ENCODE measurements at regions of chr1 and their contacts with region 1.

Region 1: GRCh38 chr1:228275739-228276421 is 68.0 kb downstream of the OBSCN start:
- DNase-seq: peak; percentile 76 to 97 (median 90)
- ATAC-seq: peak; percentile 95
- H3K4me3 ChIP-seq: peak overlapping the region; percentile 75
- H3K4me3 Mint-ChIP-seq: peak overlapping the region; percentile 82
- H3K27ac ChIP-seq: peak overlapping the region; percentile 28 to 56
- H3K27ac Mint-ChIP-seq: peak overlapping the region; percentile 81
- H3K4me1 ChIP-seq: peaks cover 27% of the 10 kb centered on the region
- H3K4me1 Mint-ChIP-seq: peaks cover 14% of the 10 kb centered on the region
- H3K27me3 ChIP-seq: no peaks in the 10 kb centered on the region
- H3K27me3 Mint-ChIP-seq: no peaks in the 10 kb centered on the region
- CTCF ChIP-seq: no peak

Region 2: GRCh38 chr1:227728059-227728891 is 547.6 kb before region 1 on chr1:
- CTCF ChIA-PET with region 1: no interaction called
- POLR2A ChIA-PET with region 1: no interaction called
- intact Hi-C with region 1: loop called in 1 of 2 experiments (anchors 5 kb)
- DNase-seq: peak in 13 of 14 experiments; percentile 46 to 90 (median 70)
- ATAC-seq: peak; percentile 58
- H3K4me3 ChIP-seq: peak overlapping the region; percentile 77
- H3K4me3 Mint-ChIP-seq: peak overlapping the region; percentile 88
- H3K27ac ChIP-seq: peak overlapping the region in 1 of 2 donors; percentile 9
- H3K27ac Mint-ChIP-seq: peak overlapping the region; percentile 76
- H3K4me1 ChIP-seq: peaks cover 27% of the 10 kb centered on the region
- H3K4me1 Mint-ChIP-seq: peaks cover 26% of the 10 kb centered on the region
- H3K27me3 ChIP-seq: no peaks in the 10 kb centered on the region
- H3K27me3 Mint-ChIP-seq: peaks cover 5% of the 10 kb centered on the region
- CTCF ChIP-seq: no peak

Region 3: DNA sequence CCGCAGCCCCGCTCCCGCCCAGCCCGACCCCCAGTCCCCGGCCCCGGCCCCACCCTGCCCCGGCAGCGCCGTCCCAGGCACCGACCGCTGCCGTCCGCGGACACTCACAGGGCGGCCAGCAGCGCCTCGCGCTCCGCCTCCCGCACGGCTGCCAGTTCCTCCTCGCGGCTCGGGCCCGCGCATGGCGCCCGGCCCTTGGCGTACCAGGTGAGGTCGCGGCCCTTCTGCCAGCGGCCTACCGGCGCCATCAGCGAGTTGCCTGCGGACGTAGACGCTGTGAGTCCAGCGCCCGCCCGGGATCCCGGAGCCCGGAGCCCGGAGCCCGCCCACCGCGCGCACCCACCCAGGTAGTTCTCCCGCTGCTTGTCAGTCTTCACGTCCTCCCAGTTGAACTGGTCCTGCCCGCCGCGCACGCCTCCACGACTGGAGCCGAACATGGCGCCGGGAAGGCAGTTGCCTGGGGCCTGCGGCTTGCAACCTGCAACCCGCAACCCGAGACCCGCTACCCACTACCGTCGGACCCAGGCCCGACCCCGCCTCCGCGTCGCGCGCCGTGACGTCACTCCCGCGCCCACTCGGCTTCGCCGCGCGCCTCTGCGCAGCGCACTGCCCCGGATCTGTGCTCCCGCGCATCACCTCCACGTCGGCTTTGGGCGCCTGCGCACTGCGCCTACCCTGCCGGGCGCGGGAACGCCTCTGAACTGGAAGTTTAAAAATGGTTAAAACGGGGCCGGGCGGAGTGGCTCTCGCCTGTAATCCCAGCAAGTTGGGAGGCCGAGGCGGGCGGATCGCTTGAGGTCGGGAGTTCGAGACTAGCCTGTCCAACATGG is 172.9 kb before region 1 on chr1 and contains the start of gene C1orf35:
- CTCF ChIA-PET with region 1: no interaction called
- POLR2A ChIA-PET with region 1: no interaction called
- intact Hi-C with region 1: loop called in 1 of 2 experiments (anchors 1 kb)
- DNase-seq: peak; percentile 87 to 96 (median 92)
- ATAC-seq: peak; percentile 78
- H3K4me3 ChIP-seq: peak within 1 kb of the TSS; percentile 83
- H3K4me3 Mint-ChIP-seq: peak within 1 kb of the TSS; percentile 96
- H3K27ac ChIP-seq: peak within 1 kb of the TSS; percentile 77 to 87
- H3K27ac Mint-ChIP-seq: peak within 1 kb of the TSS; percentile 97
- H3K4me1 ChIP-seq: peaks cover 37% of the 10 kb centered on the region
- H3K4me1 Mint-ChIP-seq: peaks cover 33% of the 10 kb centered on the region
- H3K27me3 ChIP-seq: no peaks in the 10 kb centered on the region
- H3K27me3 Mint-ChIP-seq: no peaks in the 10 kb centered on the region
- CTCF ChIP-seq: no peak
- total RNA-seq, gene C1orf35: 36.6 to 40.3 TPM

Region 4: DNA sequence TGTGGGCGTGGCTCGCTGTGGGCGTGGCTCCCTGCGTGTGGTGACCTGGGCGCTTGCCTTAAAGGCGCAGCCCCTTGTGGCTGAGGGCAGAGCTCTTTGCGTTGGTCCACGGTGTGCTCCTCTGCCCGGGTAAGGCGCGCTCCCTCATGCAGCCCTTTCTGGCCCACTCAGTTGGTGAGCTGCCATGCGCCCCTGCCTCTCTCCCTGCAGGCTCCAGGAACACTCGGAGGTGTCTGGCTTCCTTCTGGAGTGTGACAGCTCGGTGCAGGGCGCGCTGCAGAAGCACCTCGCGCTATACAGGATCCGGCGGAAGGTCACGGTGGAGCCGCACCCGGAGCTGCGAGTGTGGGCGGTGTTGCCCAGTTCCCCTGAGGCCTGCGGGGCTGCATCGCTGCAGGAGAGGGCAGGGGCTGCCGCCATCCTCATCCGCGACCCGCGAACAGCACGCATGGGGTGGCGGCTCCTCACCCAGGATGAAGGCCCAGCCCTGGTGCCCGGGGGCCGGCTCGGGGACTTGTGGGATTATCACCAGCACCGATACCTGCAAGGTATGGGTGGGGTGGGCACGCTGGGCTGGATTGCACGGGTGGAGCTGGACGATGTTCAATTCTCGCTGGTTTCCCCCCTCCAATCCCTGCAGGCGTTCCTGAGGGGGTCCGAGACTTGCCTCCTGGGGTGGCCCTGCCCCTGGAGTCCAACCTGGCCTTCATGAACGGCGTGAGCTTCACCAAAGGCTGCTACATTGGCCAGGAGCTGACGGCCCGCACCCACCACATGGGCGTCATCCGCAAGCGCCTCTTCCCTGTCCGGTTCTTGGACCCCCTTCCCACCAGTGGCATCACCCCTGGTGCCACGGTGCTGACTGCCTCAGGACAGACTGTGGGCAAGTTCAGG is 101.2 kb before region 1 on chr1:
- CTCF ChIA-PET with region 1: no interaction called
- POLR2A ChIA-PET with region 1: no interaction called
- intact Hi-C with region 1: loop called in 1 of 2 experiments (anchors 2 kb)
- DNase-seq: peak in 6 of 14 experiments; percentile 25 to 81 (median 58)
- ATAC-seq: peak; percentile 69
- H3K4me3 ChIP-seq: no peak overlapping the region
- H3K4me3 Mint-ChIP-seq: peak overlapping the region; percentile 7
- H3K27ac ChIP-seq: no peak overlapping the region
- H3K27ac Mint-ChIP-seq: peak overlapping the region; percentile 36
- H3K4me1 ChIP-seq: peaks cover 6% of the 10 kb centered on the region
- H3K4me1 Mint-ChIP-seq: peaks cover 7% of the 10 kb centered on the region
- H3K27me3 ChIP-seq: no peaks in the 10 kb centered on the region
- H3K27me3 Mint-ChIP-seq: no peaks in the 10 kb centered on the region
- CTCF ChIP-seq: no peak

Region 5: DNA sequence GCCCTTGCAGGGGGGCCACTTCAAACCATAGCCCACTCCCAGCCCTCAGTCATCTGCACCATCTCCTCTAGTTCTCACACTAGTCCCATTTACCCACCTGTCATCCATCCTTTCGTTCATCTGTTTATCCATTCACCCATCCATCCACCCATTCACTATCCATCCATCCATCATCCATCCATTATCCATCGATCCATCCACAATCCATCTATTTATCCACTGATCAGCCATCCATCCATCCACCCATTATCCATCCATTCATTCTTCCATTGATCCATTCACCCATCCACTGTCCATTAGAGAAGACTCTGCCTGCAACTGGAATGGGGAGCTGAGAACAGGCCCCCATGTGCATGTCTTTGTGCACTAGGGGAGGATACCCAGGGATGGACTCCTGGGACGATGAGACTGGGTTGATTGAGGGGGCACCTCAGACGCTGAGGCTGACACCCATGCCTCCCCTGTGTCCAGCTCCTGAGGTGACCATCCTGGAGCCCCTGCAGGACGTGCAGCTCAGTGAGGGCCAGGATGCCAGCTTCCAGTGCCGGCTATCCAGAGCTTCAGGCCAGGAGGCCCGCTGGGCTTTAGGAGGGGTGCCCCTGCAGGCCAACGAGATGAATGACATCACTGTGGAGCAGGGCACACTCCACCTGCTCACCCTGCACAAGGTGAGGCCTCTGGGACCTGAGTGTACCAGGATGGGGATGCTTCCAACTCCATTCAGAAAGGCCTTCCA is 32.9 kb after region 1 on chr1:
- CTCF ChIA-PET with region 1: no interaction called
- POLR2A ChIA-PET with region 1: no interaction called
- intact Hi-C with region 1: no loop called
- DNase-seq: peak in 2 of 14 experiments; percentile 6 to 28
- ATAC-seq: no peak
- H3K4me3 ChIP-seq: no peak overlapping the region
- H3K4me3 Mint-ChIP-seq: no peak overlapping the region
- H3K27ac ChIP-seq: no peak overlapping the region
- H3K27ac Mint-ChIP-seq: no peak overlapping the region
- H3K4me1 ChIP-seq: no peaks in the 10 kb centered on the region
- H3K4me1 Mint-ChIP-seq: no peaks in the 10 kb centered on the region
- H3K27me3 ChIP-seq: no peaks in the 10 kb centered on the region
- H3K27me3 Mint-ChIP-seq: no peaks in the 10 kb centered on the region
- CTCF ChIP-seq: no peak

Region 6: GRCh38 chr1:228405987-228406265 is 130.0 kb after region 1 on chr1:
- CTCF ChIA-PET with region 1: no interaction called
- POLR2A ChIA-PET with region 1: interaction called, 7 read pairs
- intact Hi-C with region 1: loop called in 1 of 2 experiments (anchors 2 kb)
- DNase-seq: no peak
- ATAC-seq: peak; percentile 10
- H3K4me3 ChIP-seq: peak overlapping the region; percentile 79
- H3K4me3 Mint-ChIP-seq: peak overlapping the region; percentile 96
- H3K27ac ChIP-seq: peak overlapping the region in 1 of 2 donors; percentile 39
- H3K27ac Mint-ChIP-seq: peak overlapping the region; percentile 90
- H3K4me1 ChIP-seq: peaks cover 65% of the 10 kb centered on the region
- H3K4me1 Mint-ChIP-seq: peaks cover 47% of the 10 kb centered on the region
- H3K27me3 ChIP-seq: no peaks in the 10 kb centered on the region
- H3K27me3 Mint-ChIP-seq: no peaks in the 10 kb centered on the region
- CTCF ChIP-seq: no peak

Region 7: GRCh38 chr1:228486596-228487335 is 210.9 kb after region 1 on chr1:
- CTCF ChIA-PET with region 1: no interaction called
- POLR2A ChIA-PET with region 1: interaction called, 10 read pairs
- intact Hi-C with region 1: no loop called
- DNase-seq: peak; percentile 66 to 91 (median 78)
- ATAC-seq: peak; percentile 77
- H3K4me3 ChIP-seq: peak overlapping the region; percentile 85
- H3K4me3 Mint-ChIP-seq: peak overlapping the region; percentile 95
- H3K27ac ChIP-seq: peak overlapping the region; percentile 100
- H3K27ac Mint-ChIP-seq: peak overlapping the region; percentile 100
- H3K4me1 ChIP-seq: peaks cover 43% of the 10 kb centered on the region
- H3K4me1 Mint-ChIP-seq: peaks cover 43% of the 10 kb centered on the region
- H3K27me3 ChIP-seq: no peaks in the 10 kb centered on the region
- H3K27me3 Mint-ChIP-seq: no peaks in the 10 kb centered on the region
- CTCF ChIP-seq: no peak

Measured in CD4-positive, alpha-beta T cell (primary cell).